BJ (cell line): ENCODE measurements at regions of chr11 and their contacts with region 1.

Region 1: GRCh38 chr11:32052218-32052617 is 38.7 kb upstream of the RCN1 start:
- DNase-seq: no peak
- H3K4me3 ChIP-seq: no peak overlapping the region
- H3K27me3 ChIP-seq: peaks cover 8% of the 10 kb centered on the region
- CTCF ChIP-seq: peak; percentile 67

Region 2: DNA sequence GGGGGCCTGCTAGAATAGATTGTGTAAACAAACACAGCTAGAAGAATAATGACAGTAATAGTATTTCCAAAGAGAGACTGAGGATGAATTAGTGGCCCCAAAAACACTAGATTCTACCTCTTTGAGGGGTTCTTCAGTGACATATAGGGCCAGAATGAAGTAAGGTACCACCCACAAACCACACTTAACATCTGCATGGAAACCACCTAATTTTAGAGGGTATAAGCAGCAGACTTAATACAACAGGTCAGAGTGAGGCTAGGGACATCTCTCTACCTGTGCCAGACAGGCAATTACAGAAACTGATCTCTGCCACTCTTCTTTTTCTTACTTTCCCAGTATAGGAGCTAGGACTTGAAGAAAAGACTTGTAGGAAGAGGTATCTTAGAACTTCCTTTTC is 522.5 kb before region 1 on chr11:
- CTCF ChIA-PET with region 1: no interaction called
- POLR2A ChIA-PET with region 1: no interaction called
- DNase-seq: no peak
- H3K4me3 ChIP-seq: no peak overlapping the region
- H3K27me3 ChIP-seq: no peaks in the 10 kb centered on the region
- CTCF ChIP-seq: no peak

Region 3: GRCh38 chr11:32039149-32039548 is 13.1 kb before region 1 on chr11:
- CTCF ChIA-PET with region 1: interaction called, 32 read pairs
- POLR2A ChIA-PET with region 1: no interaction called
- DNase-seq: no peak
- H3K4me3 ChIP-seq: no peak overlapping the region
- H3K27me3 ChIP-seq: 0 out of 2 replicates have a peak, but pooled peaks cover 1% of the 10 kb centered on the region
- CTCF ChIP-seq: no peak

Region 4: DNA sequence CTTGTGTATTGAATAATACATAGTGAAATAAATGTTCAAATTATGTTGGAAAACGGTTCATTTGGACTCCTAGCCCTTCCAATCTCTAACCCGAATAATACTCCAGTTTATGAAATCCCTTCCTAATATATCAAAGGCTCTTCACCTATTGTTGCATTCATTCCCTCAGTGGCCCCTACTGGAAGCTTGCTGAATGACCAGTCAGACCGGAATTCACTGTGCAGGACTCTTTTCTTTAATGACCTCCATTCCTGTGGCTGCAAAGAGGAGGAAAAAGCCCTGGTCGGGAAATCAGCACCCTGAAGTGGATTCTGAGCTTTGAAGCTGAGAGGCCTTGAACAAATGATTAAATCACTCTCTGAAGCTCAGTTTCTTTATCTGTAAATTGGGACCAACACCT is 19.6 kb after region 1 on chr11:
- CTCF ChIA-PET with region 1: interaction called, 33 read pairs
- POLR2A ChIA-PET with region 1: no interaction called
- DNase-seq: no peak
- H3K4me3 ChIP-seq: no peak overlapping the region
- H3K27me3 ChIP-seq: peaks cover 20% of the 10 kb centered on the region
- CTCF ChIP-seq: peak; percentile 70

Region 5: GRCh38 chr11:32429477-32429876 is 377.3 kb after region 1 on chr11:
- CTCF ChIA-PET with region 1: no interaction called
- POLR2A ChIA-PET with region 1: interaction called, 14 read pairs
- DNase-seq: no peak
- H3K4me3 ChIP-seq: no peak overlapping the region
- H3K27me3 ChIP-seq: peaks cover 65% of the 10 kb centered on the region
- CTCF ChIP-seq: no peak

Region 6: GRCh38 chr11:32775908-32776307 is 723.7 kb after region 1 on chr11:
- CTCF ChIA-PET with region 1: no interaction called
- POLR2A ChIA-PET with region 1: no interaction called
- DNase-seq: no peak
- H3K4me3 ChIP-seq: no peak overlapping the region
- H3K27me3 ChIP-seq: no peaks in the 10 kb centered on the region
- CTCF ChIP-seq: no peak